ENCODE measurements at regions of chr3 and their contacts with region 1.

Region 1: GRCh38 chr3:37741644-37742043 is 120.0 kb upstream of the CTDSPL start:
- DNase-seq: peak; percentile 43 to 65
- ATAC-seq: peak; percentile 48 to 77 (median 66)
- H3K4me3 ChIP-seq: no peak overlapping the region
- H3K27ac ChIP-seq: peak overlapping the region in 5 of 10 donors; percentile 6 to 76 (median 73)
- H3K4me1 ChIP-seq: peaks cover 3 to 77% (median 46%) of the 10 kb centered on the region in 9 donors
- H3K27me3 ChIP-seq: no peaks in the 10 kb centered on the region
- CTCF ChIP-seq: peak; percentile 14 to 70 (median 49)

Region 2: GRCh38 chr3:37492977-37493471 is 248.6 kb before region 1 on chr3:
- intact Hi-C with region 1: no loop called
- DNase-seq: peak in 1 of 2 donors; percentile 43
- ATAC-seq: peak; percentile 70 to 85 (median 78)
- H3K4me3 ChIP-seq: no peak overlapping the region
- H3K27ac ChIP-seq: peak overlapping the region in 9 of 10 donors; percentile 33 to 83 (median 80)
- H3K4me1 ChIP-seq: peaks cover 15 to 72% (median 59%) of the 10 kb centered on the region in 9 donors
- H3K27me3 ChIP-seq: no peaks in the 10 kb centered on the region
- CTCF ChIP-seq: no peak

Region 3: DNA sequence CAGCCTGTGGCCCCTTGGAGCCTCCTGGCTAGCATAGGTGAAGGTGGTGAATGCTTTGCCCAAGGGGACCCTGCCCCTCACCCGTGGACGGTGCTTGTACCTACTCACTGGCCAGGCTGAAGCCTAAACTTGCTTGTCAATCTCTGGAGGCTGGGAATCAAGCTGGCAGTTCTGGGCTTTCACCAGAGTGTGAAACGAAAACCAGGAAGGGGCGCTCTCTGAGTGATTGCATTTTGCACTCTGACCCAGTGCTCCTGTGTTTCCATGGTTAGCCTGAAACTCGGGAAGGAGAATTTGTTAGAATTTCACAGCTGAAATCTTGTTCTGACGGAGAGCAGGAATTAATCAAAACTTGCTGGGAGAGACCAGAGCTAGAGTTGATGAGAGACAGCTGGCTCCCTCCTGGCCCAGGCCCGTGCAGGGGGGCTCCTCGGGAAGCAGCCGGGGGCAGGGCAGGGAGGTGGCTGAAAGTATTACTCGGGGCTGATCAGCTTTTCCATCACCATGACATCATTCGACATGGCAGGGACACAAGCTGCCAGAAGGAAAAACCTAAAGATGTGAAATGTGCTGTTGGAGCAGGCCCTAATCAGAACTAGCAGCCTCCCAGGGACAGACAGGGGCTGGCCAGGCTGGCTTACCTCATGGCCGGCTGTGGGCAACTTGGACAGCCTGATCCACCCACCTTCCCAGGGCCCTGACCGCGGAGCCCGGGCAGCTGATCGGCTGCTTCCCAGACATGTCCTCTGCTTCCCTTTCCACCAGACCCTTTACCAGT is 203.5 kb before region 1 on chr3:
- intact Hi-C with region 1: loop called in 2 of 10 experiments (anchors 5 to 10 kb)
- DNase-seq: peak in 1 of 2 donors; percentile 24
- ATAC-seq: peak; percentile 26 to 69 (median 51)
- H3K4me3 ChIP-seq: no peak overlapping the region
- H3K27ac ChIP-seq: peak overlapping the region in 8 of 10 donors; percentile 8 to 77 (median 48)
- H3K4me1 ChIP-seq: peaks cover 9 to 85% (median 50%) of the 10 kb centered on the region in 9 donors
- H3K27me3 ChIP-seq: no peaks in the 10 kb centered on the region
- CTCF ChIP-seq: no peak

Region 4: DNA sequence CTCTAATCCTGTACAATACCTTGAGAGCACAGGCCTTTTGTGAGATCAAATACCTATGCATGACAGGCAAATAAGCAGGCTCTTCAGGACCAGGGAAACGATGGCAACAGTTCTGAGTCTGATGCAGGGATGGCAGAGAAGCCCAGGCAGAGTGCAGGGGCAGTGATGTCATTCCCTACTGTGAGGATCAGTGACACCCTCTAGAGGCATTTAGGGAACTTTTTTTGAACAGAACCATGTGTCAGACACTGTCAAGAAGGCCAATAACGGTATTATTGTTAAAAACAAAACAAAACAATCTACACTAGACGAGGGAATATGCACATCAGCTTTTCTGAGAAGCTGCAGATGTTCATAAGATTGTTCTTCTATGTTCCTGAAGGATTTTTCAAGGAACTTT is 194.7 kb before region 1 on chr3:
- intact Hi-C with region 1: loop called in 1 of 10 experiments (anchors 5 kb)
- DNase-seq: peak in 1 of 2 donors; percentile 65
- ATAC-seq: peak; percentile 61 to 87 (median 82)
- H3K4me3 ChIP-seq: no peak overlapping the region
- H3K27ac ChIP-seq: peak overlapping the region in 6 of 10 donors; percentile 54 to 79 (median 61)
- H3K4me1 ChIP-seq: peaks cover 9 to 59% (median 36%) of the 10 kb centered on the region in 9 donors
- H3K27me3 ChIP-seq: no peaks in the 10 kb centered on the region
- CTCF ChIP-seq: peak in 7 of 9 donors; percentile 17 to 56 (median 41)